ENCODE measurements at regions of chr2 and their contacts with region 1.

Region 1: DNA sequence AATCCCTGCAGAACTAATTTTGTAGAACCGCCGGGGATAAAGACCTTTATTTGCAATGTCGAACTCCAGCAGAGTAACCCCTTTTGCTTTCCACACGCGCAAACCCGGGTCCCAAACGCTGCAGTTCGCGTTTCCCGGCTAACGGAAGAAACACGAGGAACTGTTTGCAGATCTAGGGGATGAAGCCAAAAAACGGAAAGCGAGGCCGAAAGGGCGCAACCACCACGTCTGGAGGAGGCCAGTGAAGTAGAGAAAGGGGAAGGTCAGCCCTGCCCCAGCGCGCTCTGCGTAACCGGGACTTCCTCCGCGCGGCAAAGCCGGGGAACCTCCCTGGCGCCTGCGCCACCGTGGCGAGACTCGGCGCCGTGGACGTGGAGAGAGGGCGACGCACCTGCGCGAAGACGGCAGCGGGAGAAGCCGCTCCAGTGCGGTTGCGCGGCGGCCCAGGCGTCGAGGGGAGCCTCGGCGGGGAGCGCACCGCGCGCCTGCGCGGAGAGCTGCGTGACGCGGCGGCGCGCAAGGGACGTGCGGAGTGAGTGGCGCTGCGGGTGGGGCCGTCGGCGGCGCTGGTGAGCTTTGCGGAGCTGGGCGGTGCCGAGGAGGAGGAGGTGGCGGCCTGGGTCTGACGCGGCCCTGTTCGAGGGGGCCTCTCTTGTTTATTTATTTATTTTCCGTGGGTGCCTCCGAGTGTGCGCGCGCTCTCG is at the start of gene PPP1CB:
- DNase-seq: peak; percentile 95 to 99 (median 99)
- ATAC-seq: peak; percentile 92
- H3K4me3 ChIP-seq: peak within 1 kb of the TSS; percentile 97
- H3K4me3 Mint-ChIP-seq: peak within 1 kb of the TSS; percentile 93 to 100 (median 96)
- H3K27ac ChIP-seq: peak within 1 kb of the TSS; percentile 99
- H3K27ac Mint-ChIP-seq: peak within 1 kb of the TSS; percentile 96 to 99 (median 98)
- H3K4me1 ChIP-seq: peaks cover 42 to 44% of the 10 kb centered on the region in 2 donors
- H3K4me1 Mint-ChIP-seq: peaks cover 35 to 67% (median 64%) of the 10 kb centered on the region in 7 donors
- H3K27me3 ChIP-seq: no peaks in the 10 kb centered on the region
- H3K27me3 Mint-ChIP-seq: no peaks in the 10 kb centered on the region
- total RNA-seq, gene PPP1CB: 202 to 223 (median 210) TPM

Region 2: GRCh38 chr2:27628767-27629709 is 1122.4 kb before region 1 on chr2 and contains the starts of genes CCDC121 and GPN1:
- CTCF ChIA-PET with region 1: no interaction called
- POLR2A ChIA-PET with region 1: no interaction called
- intact Hi-C with region 1: loop called in 1 of 2 experiments (anchors 5 kb)
- DNase-seq: peak; percentile 79 to 96 (median 93)
- ATAC-seq: peak; percentile 99
- H3K4me3 ChIP-seq: peak within 1 kb of the TSS; percentile 92
- H3K4me3 Mint-ChIP-seq: no peak within 1 kb of the TSS
- H3K27ac ChIP-seq: peak within 1 kb of the TSS; percentile 92
- H3K27ac Mint-ChIP-seq: peak within 1 kb of the TSS in 5 of 9 donors; percentile 16 to 72 (median 59)
- H3K4me1 ChIP-seq: peaks cover 11 to 13% of the 10 kb centered on the region in 2 donors
- H3K4me1 Mint-ChIP-seq: peaks cover 1 to 33% (median 22%) of the 10 kb centered on the region in 7 donors
- H3K27me3 ChIP-seq: no peaks in the 10 kb centered on the region
- H3K27me3 Mint-ChIP-seq: no peaks in the 10 kb centered on the region
- total RNA-seq, gene CCDC121: 0.61 to 2.7 (median 1.9) TPM
- total RNA-seq, gene GPN1: 27.8 to 45.5 (median 28.9) TPM

Region 3: DNA sequence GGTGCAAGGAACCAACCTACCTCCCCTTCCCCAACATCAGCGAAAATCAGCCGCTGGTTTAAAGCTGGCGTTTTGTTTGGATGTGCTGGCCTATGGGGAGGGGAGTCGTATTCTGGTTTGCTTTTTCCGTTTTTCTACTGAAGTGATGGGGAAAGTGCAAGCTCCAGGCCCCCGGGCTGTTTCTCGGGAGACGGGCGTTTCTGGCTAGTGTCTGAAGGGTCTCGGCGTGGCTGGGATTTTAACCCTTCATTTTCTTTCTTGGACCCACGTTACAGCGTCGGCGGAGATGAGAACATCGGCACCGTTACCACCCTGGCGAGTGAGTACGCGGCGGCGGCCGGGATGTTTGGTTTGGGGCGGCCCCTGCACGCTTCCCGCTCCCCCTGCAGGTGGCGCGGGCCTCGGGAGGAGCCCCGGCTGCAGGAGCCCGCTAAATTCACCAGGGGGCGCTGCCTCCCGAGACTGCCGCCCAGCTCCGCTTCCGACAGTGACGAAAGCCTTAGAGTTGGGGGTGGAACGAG is 184.8 kb before region 1 on chr2:
- CTCF ChIA-PET with region 1: interaction called, 6 read pairs
- POLR2A ChIA-PET with region 1: interaction called, 18 read pairs
- intact Hi-C with region 1: loop called (anchors 1 kb)
- DNase-seq: peak; percentile 81 to 96 (median 90)
- ATAC-seq: peak; percentile 100
- H3K4me3 ChIP-seq: peak overlapping the region; percentile 74
- H3K4me3 Mint-ChIP-seq: peak overlapping the region; percentile 84 to 95 (median 92)
- H3K27ac ChIP-seq: peak overlapping the region; percentile 84
- H3K27ac Mint-ChIP-seq: peak overlapping the region; percentile 59 to 96 (median 92)
- H3K4me1 ChIP-seq: peaks cover 6 to 12% of the 10 kb centered on the region in 2 donors
- H3K4me1 Mint-ChIP-seq: peaks cover 6 to 24% (median 16%) of the 10 kb centered on the region in 7 donors
- H3K27me3 ChIP-seq: peaks cover 0 to 3% of the 10 kb centered on the region in 2 donors
- H3K27me3 Mint-ChIP-seq: peaks cover 0 to 6% (median 0%) of the 10 kb centered on the region in 5 donors

Region 4: GRCh38 chr2:28621172-28622100 is 130.0 kb before region 1 on chr2:
- CTCF ChIA-PET with region 1: interaction called, 3 read pairs
- POLR2A ChIA-PET with region 1: interaction called, 34 read pairs
- intact Hi-C with region 1: loop called (anchors 1 kb)
- DNase-seq: peak; percentile 44 to 96 (median 93)
- ATAC-seq: peak; percentile 94
- H3K4me3 ChIP-seq: peak overlapping the region; percentile 40
- H3K4me3 Mint-ChIP-seq: peak overlapping the region in 9 of 10 donors; percentile 71 to 86 (median 80)
- H3K27ac ChIP-seq: peak overlapping the region; percentile 95
- H3K27ac Mint-ChIP-seq: peak overlapping the region in 5 of 9 donors; percentile 93 to 100 (median 100)
- H3K4me1 ChIP-seq: peaks cover 43 to 86% of the 10 kb centered on the region in 2 donors
- H3K4me1 Mint-ChIP-seq: peaks cover 0 to 96% (median 59%) of the 10 kb centered on the region in 7 donors
- H3K27me3 ChIP-seq: no peaks in the 10 kb centered on the region
- H3K27me3 Mint-ChIP-seq: no peaks in the 10 kb centered on the region

Region 5: DNA sequence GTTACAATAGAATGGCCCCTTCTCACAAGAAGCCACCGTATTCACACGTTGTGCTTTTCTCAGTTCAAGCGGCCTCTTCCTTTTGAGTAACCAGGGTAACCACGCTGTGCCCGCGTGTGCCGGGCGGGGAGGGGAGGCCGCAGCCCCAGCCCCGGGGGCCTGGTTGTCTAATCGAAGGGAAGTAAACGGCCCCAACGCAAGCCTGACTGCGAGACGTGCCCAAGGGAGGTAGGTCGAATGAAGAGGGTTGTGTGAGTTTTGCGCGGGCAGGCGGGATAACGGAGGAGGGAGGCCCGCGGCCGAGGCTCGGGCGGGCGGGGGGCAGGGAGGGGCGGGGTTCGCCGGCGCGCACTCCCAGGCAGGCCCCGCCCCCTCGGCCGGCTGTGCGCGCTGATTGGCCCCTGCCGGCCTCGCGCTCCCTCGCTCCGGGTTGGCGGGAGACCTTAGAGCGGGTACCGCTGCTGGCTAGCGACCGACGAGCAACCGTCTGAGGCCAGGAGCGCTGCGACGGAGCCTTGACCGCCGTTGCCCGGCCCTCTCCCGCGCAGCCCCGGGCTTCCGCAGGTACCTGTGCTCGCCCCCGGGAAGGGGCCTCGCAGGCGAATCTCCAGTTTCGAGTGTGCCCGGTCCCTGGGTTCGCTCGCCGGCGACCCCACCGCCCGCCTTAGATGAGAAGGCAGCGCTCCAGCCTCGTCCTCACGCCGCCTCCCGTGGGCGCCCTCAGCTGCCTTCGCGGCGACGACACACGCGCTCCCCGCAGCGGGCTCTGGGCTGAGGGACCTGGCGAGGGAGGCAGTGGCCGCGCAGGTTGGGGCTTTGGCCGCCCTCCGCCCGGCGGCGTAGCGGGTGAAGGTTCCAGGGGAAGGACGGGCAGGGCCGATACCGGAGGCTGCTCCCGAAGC is 59.2 kb after region 1 on chr2 and contains the start of gene SPDYA:
- CTCF ChIA-PET with region 1: no interaction called
- POLR2A ChIA-PET with region 1: no interaction called
- intact Hi-C with region 1: loop called (anchors 1 kb)
- DNase-seq: peak; percentile 65 to 88 (median 77)
- ATAC-seq: peak; percentile 96
- H3K4me3 ChIP-seq: peak within 1 kb of the TSS; percentile 63
- H3K4me3 Mint-ChIP-seq: peak within 1 kb of the TSS; percentile 76 to 94 (median 84)
- H3K27ac ChIP-seq: peak within 1 kb of the TSS; percentile 50
- H3K27ac Mint-ChIP-seq: peak within 1 kb of the TSS; percentile 11 to 73 (median 59)
- H3K4me1 ChIP-seq: peaks cover 5 to 9% of the 10 kb centered on the region in 2 donors
- H3K4me1 Mint-ChIP-seq: peaks cover 7 to 23% (median 16%) of the 10 kb centered on the region in 7 donors
- H3K27me3 ChIP-seq: no peaks in the 10 kb centered on the region
- H3K27me3 Mint-ChIP-seq: peaks cover 0 to 8% (median 0%) of the 10 kb centered on the region in 5 donors
- total RNA-seq, gene SPDYA: 1.3 to 9.8 (median 4.6) TPM

Region 6: GRCh38 chr2:29115797-29116781 is 364.7 kb after region 1 on chr2:
- CTCF ChIA-PET with region 1: no interaction called
- POLR2A ChIA-PET with region 1: interaction called, 3 read pairs
- intact Hi-C with region 1: loop called in 1 of 2 experiments (anchors 10 kb)
- DNase-seq: peak; percentile 39 to 82 (median 75)
- ATAC-seq: peak; percentile 62
- H3K4me3 ChIP-seq: peak overlapping the region; percentile 75
- H3K4me3 Mint-ChIP-seq: peak overlapping the region; percentile 86 to 98 (median 88)
- H3K27ac ChIP-seq: peak overlapping the region; percentile 73
- H3K27ac Mint-ChIP-seq: peak overlapping the region; percentile 87 to 99 (median 97)
- H3K4me1 ChIP-seq: peaks cover 8 to 20% of the 10 kb centered on the region in 2 donors
- H3K4me1 Mint-ChIP-seq: peaks cover 23 to 61% (median 55%) of the 10 kb centered on the region in 7 donors
- H3K27me3 ChIP-seq: no peaks in the 10 kb centered on the region
- H3K27me3 Mint-ChIP-seq: peaks cover 0 to 12% (median 0%) of the 10 kb centered on the region in 5 donors

Measured in naive thymus-derived CD4-positive, alpha-beta T cell (primary cell).